Activated T-helper 2 cell treated with anti-CD3 and anti-CD28 coated beads, Interferon-gamma antibody, Interleukin-2, Interleukin-4, amounts not matched to agents 10 μg/mL and 5 μg/mL and 100 μg/mL, durations not matched to agents 14 hours and 24 hours and 36 hours (primary cell): ENCODE measurements at regions of chr10 and their contacts with region 1.

Region 1: DNA sequence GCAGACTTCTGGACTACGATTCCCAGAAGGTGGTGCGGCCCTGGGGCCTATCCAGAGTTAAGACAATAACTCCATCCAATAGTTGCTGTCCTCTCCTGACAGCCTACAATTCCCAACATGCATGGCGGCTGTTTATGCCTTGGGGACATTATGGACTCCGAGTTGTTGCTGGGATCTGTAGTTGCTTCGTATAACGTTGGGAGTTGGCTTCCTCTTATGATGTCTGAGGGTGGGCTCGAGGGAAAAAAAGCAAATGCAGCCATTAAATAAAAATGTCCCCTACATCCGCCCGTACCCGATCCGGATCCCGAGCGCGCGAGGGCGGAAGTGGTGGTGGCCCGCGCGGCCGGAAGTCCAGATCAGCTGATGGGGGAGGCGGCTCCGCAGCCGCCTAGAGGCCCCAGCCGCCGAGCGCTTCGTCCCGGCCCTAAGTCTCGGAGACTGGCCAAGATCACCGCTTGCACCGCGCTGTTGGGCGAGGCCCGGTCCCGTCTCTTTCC is at the start of gene ZSWIM8:
- DNase-seq: peak; percentile 80
- H3K4me3 Mint-ChIP-seq: peak within 1 kb of the TSS; percentile 92
- H3K27ac Mint-ChIP-seq: peak within 1 kb of the TSS; percentile 91
- H3K4me1 Mint-ChIP-seq: peaks cover 34% of the 10 kb centered on the region
- H3K27me3 Mint-ChIP-seq: no peaks in the 10 kb centered on the region
- total RNA-seq, gene ZSWIM8: 50.0 and 55.3 TPM in 2 replicates

Region 2: DNA sequence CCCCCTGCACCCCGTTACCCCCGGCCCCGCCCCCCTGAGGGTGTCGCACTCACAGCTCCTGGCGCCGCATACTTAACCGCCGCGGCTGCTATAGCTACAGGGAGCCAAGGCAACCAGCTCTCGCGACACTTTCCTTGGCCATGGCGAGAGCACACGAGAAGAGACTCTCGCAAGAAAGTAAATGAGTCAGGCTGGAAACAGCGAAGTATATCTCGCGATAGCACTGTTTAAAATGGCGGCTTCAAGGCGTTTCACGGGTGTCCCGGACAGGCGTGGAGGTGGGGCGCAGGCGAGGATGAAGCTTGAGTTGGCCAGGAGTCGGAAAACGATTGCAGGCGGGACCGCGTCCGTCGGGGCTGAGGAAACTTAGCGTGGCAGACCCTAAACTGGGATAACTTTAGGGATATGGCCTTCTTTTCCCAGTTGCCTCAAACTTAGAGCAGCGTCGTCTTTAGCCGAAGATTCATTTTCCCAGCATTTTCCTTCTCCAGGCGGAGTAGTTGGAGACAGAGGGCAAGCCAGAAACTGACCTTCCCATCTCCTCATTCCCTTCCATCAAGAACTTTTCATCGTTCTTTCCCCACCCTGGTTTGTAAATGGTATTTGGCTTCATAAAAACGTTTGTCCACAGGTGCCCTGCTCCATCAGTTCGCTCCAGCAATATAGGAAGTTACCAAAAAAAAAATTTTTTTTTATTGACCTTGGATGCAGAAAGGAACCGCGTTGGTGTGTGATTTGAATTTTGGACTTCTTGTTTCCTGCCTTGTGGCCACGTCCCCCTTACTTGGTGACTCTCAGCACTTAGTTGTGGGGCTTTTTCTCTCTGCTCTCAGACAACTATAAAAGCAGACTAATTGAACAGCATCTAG is 159.2 kb before region 1 on chr10:
- intact Hi-C with region 1: loop called (anchors 10 kb)
- DNase-seq: peak; percentile 91
- H3K4me3 Mint-ChIP-seq: peak overlapping the region; percentile 96
- H3K27ac Mint-ChIP-seq: peak overlapping the region; percentile 96
- H3K4me1 Mint-ChIP-seq: peaks cover 11% of the 10 kb centered on the region
- H3K27me3 Mint-ChIP-seq: no peaks in the 10 kb centered on the region

Region 3: GRCh38 chr10:73772280-73773151 is 12.8 kb before region 1 on chr10:
- intact Hi-C with region 1: loop called (anchors 1 kb)
- DNase-seq: peak; percentile 84
- H3K4me3 Mint-ChIP-seq: peak overlapping the region; percentile 96
- H3K27ac Mint-ChIP-seq: peak overlapping the region; percentile 90
- H3K4me1 Mint-ChIP-seq: peaks cover 52% of the 10 kb centered on the region
- H3K27me3 Mint-ChIP-seq: no peaks in the 10 kb centered on the region

Region 4: DNA sequence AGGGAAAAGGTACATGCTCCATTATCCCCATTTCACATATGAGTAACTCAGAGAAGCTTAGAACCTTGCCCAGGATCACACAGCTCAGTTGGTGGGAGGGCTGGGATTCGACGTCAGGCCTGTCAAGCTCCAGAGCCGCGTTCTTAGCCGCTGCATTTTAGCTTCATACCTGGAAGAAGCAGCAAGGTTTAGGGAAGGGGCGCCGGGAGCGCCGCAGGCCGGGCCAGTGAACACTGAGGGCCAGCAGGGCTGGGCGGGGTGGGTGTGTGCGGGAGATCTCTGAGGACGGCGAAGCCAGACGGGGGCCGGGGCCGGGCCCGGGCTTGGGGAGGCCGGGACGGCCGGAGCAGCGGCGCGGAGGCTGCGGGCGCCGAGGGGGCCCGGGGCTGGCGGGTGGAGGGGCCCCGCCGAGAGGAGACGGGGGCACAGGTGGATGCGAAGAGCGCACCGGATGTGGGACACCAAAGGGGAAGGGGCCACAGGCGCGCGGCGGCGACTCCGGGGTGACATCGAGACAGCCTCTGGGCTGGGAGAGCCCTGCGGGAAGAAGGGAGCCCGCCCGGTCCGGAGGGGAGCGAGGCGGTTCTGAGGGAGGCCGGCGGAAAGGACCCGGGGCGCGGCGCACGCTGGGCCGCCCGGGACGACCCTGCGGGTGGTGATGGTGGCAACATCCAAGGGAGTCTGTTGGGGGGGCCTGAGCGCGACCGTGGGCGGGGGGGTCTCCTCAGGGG is 25.6 kb after region 1 on chr10:
- intact Hi-C with region 1: loop called (anchors 1 kb)
- DNase-seq: peak; percentile 63
- H3K4me3 Mint-ChIP-seq: peak overlapping the region; percentile 90
- H3K27ac Mint-ChIP-seq: peak overlapping the region; percentile 94
- H3K4me1 Mint-ChIP-seq: peaks cover 28% of the 10 kb centered on the region
- H3K27me3 Mint-ChIP-seq: no peaks in the 10 kb centered on the region

Region 5: GRCh38 chr10:73827346-73828089 is 42.2 kb after region 1 on chr10:
- intact Hi-C with region 1: no loop called
- DNase-seq: no peak
- H3K4me3 Mint-ChIP-seq: no peak overlapping the region
- H3K27ac Mint-ChIP-seq: no peak overlapping the region
- H3K4me1 Mint-ChIP-seq: no peaks in the 10 kb centered on the region
- H3K27me3 Mint-ChIP-seq: no peaks in the 10 kb centered on the region

Region 6: DNA sequence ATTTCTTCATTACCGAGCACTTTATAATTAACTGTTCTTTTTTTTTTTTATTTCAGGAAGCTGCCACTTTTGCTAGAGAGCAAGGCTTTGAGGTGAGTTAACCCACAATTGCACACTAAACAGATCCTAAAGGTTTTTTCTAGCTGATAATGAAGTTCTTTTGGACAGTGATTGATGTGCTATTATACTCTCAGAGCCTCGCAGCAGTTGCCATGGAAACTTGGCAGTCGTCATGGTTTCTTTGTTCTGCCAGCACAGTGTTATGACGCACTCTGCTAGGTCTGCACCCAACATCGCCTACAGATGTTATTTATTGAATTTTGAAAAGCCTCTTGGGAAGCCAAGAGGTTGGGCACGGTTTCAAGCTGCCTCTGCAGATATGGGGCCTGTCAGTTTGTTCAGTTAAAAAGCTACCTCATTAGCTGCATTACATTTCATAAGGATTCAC is 804.0 kb after region 1 on chr10:
- intact Hi-C with region 1: loop called (anchors 10 kb)
- DNase-seq: peak; percentile 77
- H3K4me3 Mint-ChIP-seq: no peak overlapping the region
- H3K27ac Mint-ChIP-seq: peak overlapping the region; percentile 71
- H3K4me1 Mint-ChIP-seq: peaks cover 68% of the 10 kb centered on the region
- H3K27me3 Mint-ChIP-seq: no peaks in the 10 kb centered on the region